CD4-positive, alpha-beta T cell (primary cell): ENCODE measurements at regions of chr17 and their contacts with region 1.

Region 1: GRCh38 chr17:75749545-75750389 is 15.2 kb downstream of the GALK1 start:
- DNase-seq: peak; percentile 75 to 94 (median 86)
- ATAC-seq: peak; percentile 70
- H3K4me3 ChIP-seq: no peak overlapping the region
- H3K4me3 Mint-ChIP-seq: peak overlapping the region; percentile 20
- H3K27ac ChIP-seq: no peak overlapping the region
- H3K27ac Mint-ChIP-seq: no peak overlapping the region
- H3K4me1 ChIP-seq: peaks cover 34% of the 10 kb centered on the region
- H3K4me1 Mint-ChIP-seq: peaks cover 10% of the 10 kb centered on the region
- H3K27me3 ChIP-seq: no peaks in the 10 kb centered on the region
- H3K27me3 Mint-ChIP-seq: peaks cover 3% of the 10 kb centered on the region
- CTCF ChIP-seq: peak; percentile 91

Region 2: DNA sequence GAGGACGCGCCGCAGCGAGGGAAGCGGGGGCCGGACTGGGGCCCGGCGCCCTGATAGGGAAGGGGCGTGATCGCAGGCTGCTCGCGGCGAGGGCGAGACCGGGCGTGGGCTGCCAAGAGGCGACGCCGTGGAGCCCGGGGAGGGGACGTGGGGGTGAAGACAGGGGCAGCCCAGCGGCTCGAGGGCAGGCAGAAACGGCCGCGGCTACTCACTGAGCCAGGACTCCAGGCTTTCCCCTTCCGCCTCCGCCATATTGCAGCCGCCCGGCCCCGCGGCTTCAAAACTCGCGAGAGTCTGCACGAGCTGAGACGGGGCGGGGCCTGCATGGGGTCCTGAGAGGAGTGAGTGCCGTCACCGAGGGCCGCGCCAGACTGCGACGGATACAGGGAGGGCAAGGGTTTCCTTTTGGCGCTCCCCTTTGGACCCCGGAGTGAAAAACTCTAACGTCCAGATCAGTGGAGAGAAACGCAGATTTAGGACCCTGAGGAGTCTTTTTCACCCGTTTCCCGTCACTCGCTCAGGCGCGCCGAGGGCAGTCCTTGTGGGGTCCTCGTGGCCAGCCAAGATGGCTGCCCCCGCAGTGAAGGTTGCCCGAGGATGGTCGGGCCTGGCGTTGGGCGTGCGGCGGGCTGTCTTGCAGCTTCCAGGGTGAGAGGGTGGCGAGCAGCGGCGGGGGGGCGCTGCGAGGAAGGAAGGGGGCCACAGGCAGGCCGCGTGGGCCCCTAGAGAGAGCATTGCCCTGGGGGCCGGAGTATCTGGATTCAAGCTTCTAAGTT is 488.2 kb before region 1 on chr17 and contains the starts of genes GGA3 and MRPS7:
- CTCF ChIA-PET with region 1: no interaction called
- POLR2A ChIA-PET with region 1: no interaction called
- intact Hi-C with region 1: loop called in 1 of 2 experiments (anchors 10 kb)
- DNase-seq: peak; percentile 92 to 97 (median 95)
- ATAC-seq: peak; percentile 94
- H3K4me3 ChIP-seq: peak within 1 kb of the TSS; percentile 90
- H3K4me3 Mint-ChIP-seq: peak within 1 kb of the TSS; percentile 100
- H3K27ac ChIP-seq: peak within 1 kb of the TSS; percentile 94 to 96
- H3K27ac Mint-ChIP-seq: peak within 1 kb of the TSS; percentile 100
- H3K4me1 ChIP-seq: peaks cover 35% of the 10 kb centered on the region
- H3K4me1 Mint-ChIP-seq: peaks cover 58% of the 10 kb centered on the region
- H3K27me3 ChIP-seq: no peaks in the 10 kb centered on the region
- H3K27me3 Mint-ChIP-seq: no peaks in the 10 kb centered on the region
- CTCF ChIP-seq: no peak
- total RNA-seq, gene GGA3: 88.8 to 96.5 TPM
- total RNA-seq, gene MRPS7: 33.2 to 35.2 TPM

Region 3: DNA sequence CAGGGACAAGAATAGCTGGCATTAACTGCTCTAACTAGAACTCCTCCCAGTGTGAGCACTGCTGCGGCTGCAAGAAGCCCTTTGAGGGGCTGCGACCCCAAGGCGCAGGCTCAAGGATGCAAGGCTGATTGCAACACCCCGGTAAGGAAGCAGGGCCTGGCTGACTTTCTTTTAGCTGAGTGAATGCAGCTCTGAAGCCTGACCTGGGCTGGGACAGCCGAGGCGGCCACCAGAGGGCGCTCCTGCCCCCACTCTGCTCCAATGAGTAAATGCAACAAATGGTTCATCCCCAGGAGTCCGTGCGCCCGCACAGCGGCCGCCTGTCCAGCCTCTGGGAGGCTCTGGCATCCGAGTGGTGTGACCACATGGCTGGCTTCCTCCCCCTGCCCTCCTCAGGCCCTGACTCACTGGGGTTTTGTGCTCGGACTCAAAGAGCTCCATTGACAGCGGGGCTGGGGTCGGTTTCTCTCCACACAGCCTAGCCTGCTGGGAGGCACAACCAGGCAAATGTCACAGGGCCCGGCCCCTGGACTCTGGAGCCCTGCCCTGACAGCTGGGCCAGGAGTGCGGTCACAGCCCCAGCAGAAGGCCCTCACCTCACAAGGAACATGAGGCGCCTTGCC is 116.8 kb before region 1 on chr17 and contains the start of gene SMIM5:
- CTCF ChIA-PET with region 1: interaction called, 78 read pairs
- POLR2A ChIA-PET with region 1: interaction called, 12 read pairs
- intact Hi-C with region 1: loop called (anchors 1 kb)
- DNase-seq: peak; percentile 71 to 91 (median 80)
- ATAC-seq: peak; percentile 86
- H3K4me3 ChIP-seq: no peak within 1 kb of the TSS
- H3K4me3 Mint-ChIP-seq: no peak within 1 kb of the TSS
- H3K27ac ChIP-seq: no peak within 1 kb of the TSS
- H3K27ac Mint-ChIP-seq: no peak within 1 kb of the TSS
- H3K4me1 ChIP-seq: peaks cover 17% of the 10 kb centered on the region
- H3K4me1 Mint-ChIP-seq: peaks cover 13% of the 10 kb centered on the region
- H3K27me3 ChIP-seq: no peaks in the 10 kb centered on the region
- H3K27me3 Mint-ChIP-seq: no peaks in the 10 kb centered on the region
- CTCF ChIP-seq: peak; percentile 81
- total RNA-seq, gene SMIM5: 0.75 to 1.3 TPM

Region 4: GRCh38 chr17:75679706-75680442 is 69.9 kb before region 1 on chr17:
- CTCF ChIA-PET with region 1: interaction called, 9 read pairs
- POLR2A ChIA-PET with region 1: interaction called, 3 read pairs
- intact Hi-C with region 1: loop called (anchors 1 kb)
- DNase-seq: no peak
- ATAC-seq: no peak
- H3K4me3 ChIP-seq: no peak overlapping the region
- H3K4me3 Mint-ChIP-seq: no peak overlapping the region
- H3K27ac ChIP-seq: no peak overlapping the region
- H3K27ac Mint-ChIP-seq: no peak overlapping the region
- H3K4me1 ChIP-seq: peaks cover 4% of the 10 kb centered on the region
- H3K4me1 Mint-ChIP-seq: peaks cover 25% of the 10 kb centered on the region
- H3K27me3 ChIP-seq: no peaks in the 10 kb centered on the region
- H3K27me3 Mint-ChIP-seq: no peaks in the 10 kb centered on the region
- CTCF ChIP-seq: no peak

Region 5: GRCh38 chr17:75779231-75779986 is 29.6 kb after region 1 on chr17:
- CTCF ChIA-PET with region 1: interaction called, 25 read pairs
- POLR2A ChIA-PET with region 1: interaction called, 58 read pairs
- intact Hi-C with region 1: no loop called
- DNase-seq: peak; percentile 86 to 99 (median 95)
- ATAC-seq: peak; percentile 64
- H3K4me3 ChIP-seq: peak overlapping the region; percentile 79
- H3K4me3 Mint-ChIP-seq: peak overlapping the region; percentile 97
- H3K27ac ChIP-seq: peak overlapping the region; percentile 93 to 95
- H3K27ac Mint-ChIP-seq: peak overlapping the region; percentile 97
- H3K4me1 ChIP-seq: peaks cover 27% of the 10 kb centered on the region
- H3K4me1 Mint-ChIP-seq: peaks cover 60% of the 10 kb centered on the region
- H3K27me3 ChIP-seq: no peaks in the 10 kb centered on the region
- H3K27me3 Mint-ChIP-seq: peaks cover 5% of the 10 kb centered on the region
- CTCF ChIP-seq: no peak

Region 6: DNA sequence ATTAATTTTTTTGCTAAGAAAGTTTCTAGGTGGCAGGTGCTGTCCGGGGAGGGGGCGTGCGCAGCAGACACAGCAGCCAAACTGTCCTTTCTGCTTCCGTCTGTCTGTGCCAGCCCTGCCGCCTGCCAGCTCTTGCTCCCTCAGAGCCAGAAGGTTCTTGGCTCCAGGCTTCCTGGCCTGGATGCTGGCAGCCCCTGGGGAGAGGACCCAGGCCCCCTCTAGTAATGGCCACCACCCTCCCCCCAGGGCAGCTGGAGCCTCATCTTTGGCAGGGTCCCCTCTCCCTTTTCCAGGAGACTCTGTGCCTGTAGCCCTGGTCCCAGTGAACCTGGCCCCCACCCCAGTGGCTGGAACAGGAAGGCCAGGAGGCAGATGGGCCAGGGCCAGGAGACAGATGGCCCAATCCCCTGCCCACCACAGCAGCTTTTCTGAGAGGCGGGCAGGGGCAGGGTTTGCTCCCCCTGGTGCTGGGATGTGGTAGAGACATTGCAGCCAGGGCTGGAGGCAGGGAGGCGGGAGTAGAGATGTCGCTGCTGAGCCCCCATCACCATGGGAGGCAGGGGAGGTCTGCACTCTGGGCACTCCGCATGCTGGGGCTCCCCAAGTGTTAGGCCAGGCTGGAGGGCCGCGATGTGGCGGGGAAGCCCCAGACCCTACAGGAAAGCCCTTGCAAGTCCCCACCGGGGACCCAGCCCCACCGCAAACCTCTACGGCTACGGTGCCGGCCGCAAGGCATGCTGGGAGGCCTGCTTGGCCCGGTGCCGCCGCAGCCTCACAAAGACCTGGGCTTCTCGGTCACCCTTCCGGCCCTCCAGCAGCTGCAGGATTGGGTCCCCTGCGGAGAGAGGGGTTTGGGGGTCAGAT is 77.7 kb after region 1 on chr17:
- CTCF ChIA-PET with region 1: interaction called, 51 read pairs
- POLR2A ChIA-PET with region 1: interaction called, 5 read pairs
- intact Hi-C with region 1: loop called in 1 of 2 experiments (anchors 2 kb)
- DNase-seq: peak; percentile 30 to 85 (median 61)
- ATAC-seq: peak; percentile 76
- H3K4me3 ChIP-seq: peak overlapping the region; percentile 32
- H3K4me3 Mint-ChIP-seq: peak overlapping the region; percentile 34
- H3K27ac ChIP-seq: peak overlapping the region; percentile 39 to 46
- H3K27ac Mint-ChIP-seq: peak overlapping the region; percentile 86
- H3K4me1 ChIP-seq: peaks cover 46% of the 10 kb centered on the region
- H3K4me1 Mint-ChIP-seq: peaks cover 17% of the 10 kb centered on the region
- H3K27me3 ChIP-seq: no peaks in the 10 kb centered on the region
- H3K27me3 Mint-ChIP-seq: no peaks in the 10 kb centered on the region
- CTCF ChIP-seq: peak; percentile 84

Region 7: DNA sequence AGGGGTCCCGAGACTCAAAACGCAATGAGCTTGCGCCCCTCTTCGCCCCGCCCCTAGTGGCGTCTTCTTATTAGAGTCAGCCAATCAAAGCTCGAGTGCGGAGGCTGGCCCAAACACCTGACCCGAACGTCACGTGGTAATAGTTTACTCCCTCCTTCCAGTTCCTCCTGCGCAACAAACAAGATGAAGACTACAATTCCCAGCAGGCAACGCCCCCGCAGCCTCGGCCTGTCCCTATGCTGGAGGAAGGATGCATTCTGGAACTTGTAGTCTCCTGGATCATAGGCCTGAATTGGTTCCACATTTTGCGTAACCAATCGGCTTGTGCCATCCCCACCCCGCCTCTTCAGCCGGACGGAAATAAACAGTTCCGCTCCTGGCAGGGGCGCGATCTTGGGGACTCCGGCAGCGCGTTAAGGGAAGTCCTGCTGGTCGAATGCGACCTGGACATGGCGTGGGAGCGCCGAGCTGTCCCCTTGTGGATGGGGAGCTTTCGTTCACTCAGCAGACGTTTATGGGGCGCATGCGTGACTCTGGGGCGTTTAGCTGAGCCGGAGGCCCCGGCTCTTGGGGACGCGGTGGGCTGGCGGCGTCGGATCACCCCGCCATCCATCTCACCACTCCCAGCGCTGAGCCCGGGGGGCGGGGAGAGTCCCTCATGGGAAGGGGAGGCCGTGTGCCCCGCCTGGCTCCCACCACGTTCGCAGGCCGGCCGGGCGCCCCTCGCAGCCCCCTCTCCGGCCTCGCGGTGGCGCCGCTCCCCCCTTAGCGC is 105.7 kb after region 1 on chr17 and contains the start of gene WBP2:
- CTCF ChIA-PET with region 1: interaction called, 18 read pairs
- POLR2A ChIA-PET with region 1: interaction called, 26 read pairs
- intact Hi-C with region 1: no loop called
- DNase-seq: peak; percentile 92 to 100 (median 95)
- ATAC-seq: peak; percentile 91
- H3K4me3 ChIP-seq: peak within 1 kb of the TSS; percentile 82
- H3K4me3 Mint-ChIP-seq: peak within 1 kb of the TSS; percentile 90
- H3K27ac ChIP-seq: peak within 1 kb of the TSS; percentile 87 to 90
- H3K27ac Mint-ChIP-seq: no peak within 1 kb of the TSS
- H3K4me1 ChIP-seq: peaks cover 45% of the 10 kb centered on the region
- H3K4me1 Mint-ChIP-seq: peaks cover 29% of the 10 kb centered on the region
- H3K27me3 ChIP-seq: no peaks in the 10 kb centered on the region
- H3K27me3 Mint-ChIP-seq: no peaks in the 10 kb centered on the region
- CTCF ChIP-seq: peak; percentile 53
- total RNA-seq, gene WBP2: 98.5 to 114 TPM